Breast epithelium (tissue), 4 donors: ENCODE measurements at regions of chr4 and their contacts with region 1.

Region 1: GRCh38 chr4:156085100-156085499 is 131.4 kb upstream of the CTSO start:
- DNase-seq: no peak
- H3K4me3 ChIP-seq: no peak overlapping the region
- H3K27ac ChIP-seq: no peak overlapping the region
- H3K4me1 ChIP-seq: no peaks in the 10 kb centered on the region
- H3K27me3 ChIP-seq: no peaks in the 10 kb centered on the region
- CTCF ChIP-seq: no peak
- POLR2A ChIP-seq: no peak

Region 2: GRCh38 chr4:155742310-155743015 is 342.6 kb before region 1 on chr4:
- intact Hi-C with region 1: no loop called
- DNase-seq: no peak
- H3K4me3 ChIP-seq: no peak overlapping the region
- H3K27ac ChIP-seq: no peak overlapping the region
- H3K4me1 ChIP-seq: no peaks in the 10 kb centered on the region
- H3K27me3 ChIP-seq: no peaks in the 10 kb centered on the region
- CTCF ChIP-seq: no peak
- POLR2A ChIP-seq: no peak

Region 3: GRCh38 chr4:156705311-156705710 is 620.2 kb after region 1 on chr4:
- intact Hi-C with region 1: loop called (anchors 5 kb)
- DNase-seq: no peak
- H3K4me3 ChIP-seq: no peak overlapping the region
- H3K27ac ChIP-seq: no peak overlapping the region
- H3K4me1 ChIP-seq: no peaks in the 10 kb centered on the region
- H3K27me3 ChIP-seq: no peaks in the 10 kb centered on the region
- CTCF ChIP-seq: no peak
- POLR2A ChIP-seq: no peak